HCT116 (cell line): ENCODE measurements at regions of chr10 and their contacts with region 1.

Region 1: DNA sequence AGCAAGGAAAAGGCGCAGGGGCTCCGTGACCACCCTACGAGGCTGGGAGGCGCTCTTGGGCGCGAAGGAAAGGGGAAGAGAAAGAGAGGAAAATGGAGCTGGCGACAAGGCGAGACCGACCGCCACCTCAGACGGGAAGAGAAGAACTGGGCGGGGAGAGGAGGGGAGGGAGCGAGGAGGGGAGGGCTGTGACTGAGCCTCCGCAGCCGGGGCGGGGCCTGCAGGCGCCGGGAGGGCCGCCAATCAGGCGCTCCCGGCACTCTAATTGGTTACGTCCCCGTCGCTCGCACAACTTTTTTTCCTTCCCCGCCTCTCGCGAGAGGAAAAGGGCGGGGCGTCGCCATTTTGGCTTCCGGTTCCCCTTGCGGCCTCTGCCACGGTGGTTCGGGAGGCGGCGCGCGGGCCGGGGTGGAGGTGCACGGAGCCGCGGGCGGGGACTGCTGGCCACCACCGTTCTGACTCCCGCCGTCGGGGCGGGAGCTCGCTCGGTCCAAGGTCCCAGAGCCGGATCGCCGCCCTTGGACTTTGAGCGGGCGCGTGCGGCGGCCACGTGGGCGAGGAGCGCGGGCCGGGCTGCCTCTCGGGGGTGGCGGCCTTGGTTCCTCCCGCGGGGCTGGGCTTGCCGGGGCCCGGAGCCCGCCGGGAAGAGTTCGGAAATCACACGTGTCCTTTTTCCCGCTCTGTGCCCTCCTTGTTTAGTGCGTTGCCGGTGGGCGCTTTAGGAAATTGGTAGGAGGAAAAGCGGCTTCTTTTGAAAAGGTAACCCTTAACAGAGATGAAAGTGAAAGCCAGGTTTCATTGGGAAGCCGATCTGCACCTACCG is at the start of gene GDI2:
- DNase-seq: peak; percentile 90
- ATAC-seq: peak; percentile 96
- H3K4me3 ChIP-seq: peak within 1 kb of the TSS; percentile 91 to 99
- H3K27ac ChIP-seq: peak within 1 kb of the TSS; percentile 85
- H3K4me1 ChIP-seq: peaks cover 11 to 27% of the 10 kb centered on the region in 2 experiments; a peak in 3 of 4 replicates
- H3K27me3 ChIP-seq: no peaks in the 10 kb centered on the region
- CTCF ChIP-seq: no peak
- POLR2A ChIP-seq: peak; percentile 86
- RAD21 ChIP-seq: no peak
- total RNA-seq, gene GDI2: 144 TPM

Region 2: GRCh38 chr10:5434017-5434753 is 379.3 kb before region 1 on chr10:
- CTCF ChIA-PET with region 1: no interaction called
- POLR2A ChIA-PET with region 1: no interaction called
- RAD21 ChIA-PET with region 1: no interaction called
- intact Hi-C with region 1: no loop called
- DNase-seq: peak; percentile 37
- ATAC-seq: peak; percentile 83
- H3K4me3 ChIP-seq: no peak overlapping the region
- H3K27ac ChIP-seq: no peak overlapping the region
- H3K4me1 ChIP-seq: no peaks in the 10 kb centered on the region
- H3K27me3 ChIP-seq: no peaks in the 10 kb centered on the region
- CTCF ChIP-seq: peak; percentile 57 to 80 (median 69); a peak in 5 of 6 replicates
- POLR2A ChIP-seq: no peak
- RAD21 ChIP-seq: peak; percentile 74

Region 3: GRCh38 chr10:5832936-5833335 is 19.4 kb after region 1 on chr10:
- CTCF ChIA-PET with region 1: no interaction called
- POLR2A ChIA-PET with region 1: no interaction called
- RAD21 ChIA-PET with region 1: no interaction called
- intact Hi-C with region 1: no loop called
- DNase-seq: no peak
- ATAC-seq: peak; percentile 65; the same call in 1 of the 2 replicates
- H3K4me3 ChIP-seq: no peak overlapping the region
- H3K27ac ChIP-seq: no peak overlapping the region
- H3K4me1 ChIP-seq: peaks cover 2 to 8% of the 10 kb centered on the region in 2 experiments; a peak in 3 of 4 replicates
- H3K27me3 ChIP-seq: no peaks in the 10 kb centered on the region
- CTCF ChIP-seq: no peak
- POLR2A ChIP-seq: no peak
- RAD21 ChIP-seq: no peak

Region 4: GRCh38 chr10:5854106-5854570 is 40.6 kb after region 1 on chr10:
- CTCF ChIA-PET with region 1: no interaction called
- POLR2A ChIA-PET with region 1: interaction called, 3 read pairs
- RAD21 ChIA-PET with region 1: no interaction called
- intact Hi-C with region 1: loop called (anchors 5 kb)
- DNase-seq: no peak
- ATAC-seq: peak; percentile 16
- H3K4me3 ChIP-seq: no peak overlapping the region
- H3K27ac ChIP-seq: no peak overlapping the region
- H3K4me1 ChIP-seq: peaks cover 3 to 14% of the 10 kb centered on the region in 2 experiments; a peak in 2 of 4 replicates
- H3K27me3 ChIP-seq: no peaks in the 10 kb centered on the region
- CTCF ChIP-seq: no peak
- POLR2A ChIP-seq: no peak
- RAD21 ChIP-seq: no peak

Region 5: GRCh38 chr10:6033954-6034353 is 220.5 kb after region 1 on chr10:
- CTCF ChIA-PET with region 1: no interaction called
- POLR2A ChIA-PET with region 1: no interaction called
- RAD21 ChIA-PET with region 1: no interaction called
- intact Hi-C with region 1: no loop called
- DNase-seq: no peak
- ATAC-seq: no peak
- H3K4me3 ChIP-seq: no peak overlapping the region
- H3K27ac ChIP-seq: no peak overlapping the region
- H3K4me1 ChIP-seq: no peaks in the 10 kb centered on the region
- H3K27me3 ChIP-seq: peaks cover 3% of the 10 kb centered on the region; the same call in 1 of the 2 replicates
- CTCF ChIP-seq: no peak
- POLR2A ChIP-seq: no peak
- RAD21 ChIP-seq: no peak